ENCODE measurements at regions of chr1 and their contacts with region 1.

Region 1: GRCh38 chr1:6602669-6603237 is at the start of gene KLHL21:
- DNase-seq: peak; percentile 86
- ATAC-seq: peak; percentile 63
- H3K4me3 Mint-ChIP-seq: peak within 1 kb of the TSS; percentile 99
- H3K27ac Mint-ChIP-seq: peak within 1 kb of the TSS; percentile 95
- H3K4me1 Mint-ChIP-seq: peaks cover 30% of the 10 kb centered on the region
- H3K27me3 Mint-ChIP-seq: no peaks in the 10 kb centered on the region
- total RNA-seq, gene KLHL21: 22.8 to 23.0 TPM

Region 2: DNA sequence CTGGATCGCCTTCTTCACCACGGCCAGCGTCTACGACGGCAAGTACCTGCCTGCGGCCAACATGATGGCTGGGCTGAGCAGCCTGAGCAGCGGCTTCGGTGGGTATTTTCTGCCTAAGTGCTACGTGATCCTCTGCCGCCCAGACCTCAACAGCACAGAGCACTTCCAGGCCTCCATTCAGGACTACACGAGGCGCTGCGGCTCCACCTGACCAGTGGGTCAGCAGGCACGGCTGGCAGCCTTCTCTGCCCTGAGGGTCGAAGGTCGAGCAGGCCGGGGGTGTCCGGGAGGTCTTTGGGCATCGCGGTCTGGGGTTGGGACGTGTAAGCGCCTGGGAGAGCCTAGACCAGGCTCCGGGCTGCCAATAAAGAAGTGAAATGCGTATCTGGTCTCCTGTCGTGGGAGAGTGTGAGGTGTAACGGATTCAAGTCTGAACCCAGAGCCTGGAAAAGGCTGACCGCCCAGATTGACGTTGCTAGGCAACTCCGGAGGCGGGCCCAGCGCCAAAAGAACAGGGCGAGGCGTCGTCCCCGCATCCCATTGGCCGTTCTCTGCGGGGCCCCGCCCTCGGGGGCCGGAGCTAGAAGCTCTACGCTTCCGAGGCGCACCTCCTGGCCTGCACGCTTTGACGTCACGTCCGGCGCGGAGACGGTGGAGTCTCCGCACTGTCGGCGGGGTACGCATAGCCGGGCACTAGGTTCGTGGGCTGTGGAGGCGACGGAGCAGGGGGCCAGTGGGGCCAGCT is 23.2 kb before region 1 on chr1 and contains the start of gene ZBTB48:
- CTCF ChIA-PET with region 1: interaction called, 4 read pairs
- POLR2A ChIA-PET with region 1: interaction called, 32 read pairs
- DNase-seq: peak; percentile 98
- ATAC-seq: peak; percentile 98
- H3K4me3 Mint-ChIP-seq: peak within 1 kb of the TSS; percentile 97
- H3K27ac Mint-ChIP-seq: peak within 1 kb of the TSS; percentile 99
- H3K4me1 Mint-ChIP-seq: peaks cover 35% of the 10 kb centered on the region
- H3K27me3 Mint-ChIP-seq: no peaks in the 10 kb centered on the region
- total RNA-seq, gene ZBTB48: 36.5 to 41.7 TPM

Region 3: DNA sequence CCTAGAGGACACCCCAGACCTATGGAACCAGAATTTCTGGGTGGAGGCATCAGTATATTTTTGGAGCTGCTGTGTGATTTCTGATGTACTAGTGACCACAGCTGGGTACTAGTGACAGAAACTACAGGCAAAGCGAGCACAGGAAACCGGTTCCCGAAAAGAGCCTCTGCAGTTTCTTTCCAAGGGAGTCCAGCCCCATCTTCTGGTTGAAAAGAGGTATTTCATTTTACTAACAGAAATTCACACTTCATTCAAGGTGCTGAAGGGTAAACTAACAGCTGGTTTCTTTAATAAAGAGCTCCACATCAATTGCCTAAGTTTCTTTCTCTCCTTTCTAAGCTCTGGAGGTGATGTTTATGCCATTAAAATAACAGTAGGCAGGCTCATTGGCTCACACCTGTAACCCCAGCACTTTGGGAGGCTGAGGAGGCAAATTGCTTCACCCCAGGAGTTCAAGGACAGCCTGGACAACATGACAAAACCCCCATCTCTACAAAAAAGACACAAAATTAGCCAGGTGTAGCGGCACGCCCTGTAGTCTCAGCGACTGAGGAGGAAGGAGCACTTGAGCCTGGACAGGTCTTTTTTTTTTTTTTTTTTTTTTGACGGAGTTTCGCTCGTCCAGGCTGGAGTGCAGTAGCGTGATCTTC is 43.9 kb after region 1 on chr1:
- CTCF ChIA-PET with region 1: interaction called, 19 read pairs
- POLR2A ChIA-PET with region 1: interaction called, 3 read pairs
- DNase-seq: peak; percentile 44
- ATAC-seq: peak; percentile 44
- H3K4me3 Mint-ChIP-seq: no peak overlapping the region
- H3K27ac Mint-ChIP-seq: no peak overlapping the region
- H3K4me1 Mint-ChIP-seq: no peaks in the 10 kb centered on the region
- H3K27me3 Mint-ChIP-seq: no peaks in the 10 kb centered on the region